HepG2 (cell line): ENCODE measurements at regions of chr18 and their contacts with region 1.

Region 1: DNA sequence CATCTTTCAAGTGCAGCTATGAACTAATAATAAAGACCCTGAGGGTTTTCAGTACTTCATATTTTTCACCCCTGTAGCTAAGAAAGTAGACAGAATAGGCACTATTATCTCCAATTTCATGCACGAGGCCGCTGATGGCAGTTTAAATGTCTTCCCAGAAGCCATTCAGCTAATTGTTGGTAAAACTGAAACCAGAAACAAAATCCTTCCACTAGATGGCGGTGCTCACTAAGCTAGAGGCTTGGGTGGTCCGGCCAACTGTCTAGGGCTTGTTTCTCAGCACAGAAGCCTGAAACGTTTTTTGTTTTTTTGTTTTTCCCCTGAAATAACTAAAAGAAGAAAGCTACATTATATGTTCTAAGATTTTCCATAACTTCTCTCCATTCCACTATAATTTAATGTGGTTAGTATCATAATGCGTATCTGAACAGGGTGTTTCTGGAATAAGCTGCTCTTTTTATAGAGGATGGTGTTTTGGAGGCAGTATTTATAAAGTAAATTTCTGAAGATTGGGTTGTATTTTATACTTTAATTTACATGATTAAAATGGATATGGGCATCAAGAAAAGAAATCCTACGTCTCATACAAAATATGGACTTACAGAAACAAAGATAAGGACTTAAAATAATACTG is 159.4 kb downstream of the PIK3C3 start:
- DNase-seq: peak; percentile 71
- ATAC-seq: peak; percentile 88
- H3K4me3 ChIP-seq: peak overlapping the region in 2 of 3 experiments; percentile 42 to 46; a peak in 2 of 6 replicates
- H3K27ac ChIP-seq: peak overlapping the region; percentile 45
- H3K4me1 ChIP-seq: peaks cover 26% of the 10 kb centered on the region
- H3K27me3 ChIP-seq: no peaks in the 10 kb centered on the region
- CTCF ChIP-seq: peak; percentile 89
- EP300 ChIP-seq: no peak
- POLR2A ChIP-seq: no peak
- RAD21 ChIP-seq: peak; percentile 91

Region 2: DNA sequence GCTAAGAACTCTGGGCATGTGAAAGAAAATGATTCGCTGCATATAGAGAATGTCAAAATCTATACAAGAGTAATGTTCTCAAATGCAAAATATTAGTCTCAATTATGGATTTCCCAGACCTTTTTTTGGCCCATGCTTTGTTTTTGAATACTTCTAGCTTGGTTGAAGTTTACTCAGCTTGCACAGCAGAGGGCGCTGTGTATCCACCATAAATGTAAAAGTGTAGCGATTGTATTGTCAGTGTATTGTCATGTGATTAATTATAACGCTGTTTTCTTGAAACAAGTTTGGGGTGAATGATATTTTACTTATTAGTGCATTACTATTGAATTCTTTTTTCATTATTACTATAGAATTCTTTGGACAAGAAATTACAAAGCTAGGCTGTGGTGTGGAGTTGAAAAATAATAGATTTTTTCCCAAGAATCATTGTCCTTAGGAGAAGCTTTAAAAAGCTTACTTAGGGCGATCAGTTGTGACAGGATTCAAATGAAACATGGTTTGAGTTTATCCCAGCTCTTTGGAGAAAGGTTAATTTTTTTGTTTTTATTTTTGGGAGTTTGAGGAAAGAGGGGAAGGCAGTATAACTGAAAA is 61.1 kb before region 1 on chr18:
- CTCF ChIA-PET with region 1: interaction called, 4 read pairs
- POLR2A ChIA-PET with region 1: interaction called, 5 read pairs
- in situ Hi-C with region 1: no loop called
- intact Hi-C with region 1: loop called (anchors 1 kb)
- DNase-seq: peak; percentile 34
- ATAC-seq: peak; percentile 79
- H3K4me3 ChIP-seq: no peak overlapping the region
- H3K27ac ChIP-seq: no peak overlapping the region
- H3K4me1 ChIP-seq: peaks cover 2% of the 10 kb centered on the region
- H3K27me3 ChIP-seq: no peaks in the 10 kb centered on the region
- CTCF ChIP-seq: peak; percentile 72
- EP300 ChIP-seq: no peak
- POLR2A ChIP-seq: no peak
- RAD21 ChIP-seq: peak; percentile 53; the same call in 1 of the 2 replicates

Region 3: GRCh38 chr18:42274488-42275137 is 160.2 kb after region 1 on chr18:
- CTCF ChIA-PET with region 1: interaction called, 28 read pairs
- POLR2A ChIA-PET with region 1: no interaction called
- in situ Hi-C with region 1: loop called (anchors 10 kb)
- intact Hi-C with region 1: loop called (anchors 1 kb)
- DNase-seq: peak; percentile 62
- ATAC-seq: peak; percentile 86
- H3K4me3 ChIP-seq: no peak overlapping the region
- H3K27ac ChIP-seq: no peak overlapping the region
- H3K4me1 ChIP-seq: no peaks in the 10 kb centered on the region
- H3K27me3 ChIP-seq: no peaks in the 10 kb centered on the region
- CTCF ChIP-seq: peak; percentile 56
- EP300 ChIP-seq: no peak
- POLR2A ChIP-seq: no peak
- RAD21 ChIP-seq: 0 out of 2 replicates have a peak, but pooled peaks have one; percentile 37

Region 4: GRCh38 chr18:42339372-42339771 is 224.9 kb after region 1 on chr18:
- CTCF ChIA-PET with region 1: no interaction called
- POLR2A ChIA-PET with region 1: interaction called, 5 read pairs
- in situ Hi-C with region 1: no loop called
- intact Hi-C with region 1: loop called (anchors 1 kb)
- DNase-seq: peak; percentile 80
- ATAC-seq: peak; percentile 51
- H3K4me3 ChIP-seq: no peak overlapping the region
- H3K27ac ChIP-seq: peak overlapping the region; percentile 77
- H3K4me1 ChIP-seq: peaks cover 67% of the 10 kb centered on the region
- H3K27me3 ChIP-seq: no peaks in the 10 kb centered on the region
- CTCF ChIP-seq: no peak
- EP300 ChIP-seq: peak in 1 of 2 experiments; percentile 68; a peak in 2 of 4 replicates
- POLR2A ChIP-seq: no peak
- RAD21 ChIP-seq: no peak

Region 5: DNA sequence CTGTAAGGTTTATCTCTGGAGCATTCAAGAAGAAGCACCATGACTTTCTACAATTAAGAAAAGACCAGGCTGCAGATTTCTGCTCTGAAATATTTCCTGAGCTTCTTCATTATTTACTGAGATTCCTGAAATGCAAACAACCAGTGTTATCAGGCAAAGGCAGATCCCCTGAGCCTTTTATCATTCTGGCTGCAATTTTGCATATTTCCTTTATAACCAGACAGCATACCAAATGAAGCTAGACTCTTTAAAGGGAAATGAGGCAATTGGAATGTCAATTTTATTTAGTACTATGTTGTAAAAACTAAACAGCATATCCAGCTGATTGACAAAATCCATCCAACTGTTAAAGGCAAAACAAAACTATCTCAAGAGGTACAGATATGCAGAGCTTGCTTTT is 628.5 kb after region 1 on chr18:
- CTCF ChIA-PET with region 1: no interaction called
- POLR2A ChIA-PET with region 1: no interaction called
- in situ Hi-C with region 1: no loop called
- intact Hi-C with region 1: loop called (anchors 10 kb)
- DNase-seq: no peak
- ATAC-seq: no peak
- H3K4me3 ChIP-seq: no peak overlapping the region
- H3K27ac ChIP-seq: no peak overlapping the region
- H3K4me1 ChIP-seq: no peaks in the 10 kb centered on the region
- H3K27me3 ChIP-seq: no peaks in the 10 kb centered on the region
- CTCF ChIP-seq: no peak
- EP300 ChIP-seq: no peak
- POLR2A ChIP-seq: no peak
- RAD21 ChIP-seq: no peak

Region 6: DNA sequence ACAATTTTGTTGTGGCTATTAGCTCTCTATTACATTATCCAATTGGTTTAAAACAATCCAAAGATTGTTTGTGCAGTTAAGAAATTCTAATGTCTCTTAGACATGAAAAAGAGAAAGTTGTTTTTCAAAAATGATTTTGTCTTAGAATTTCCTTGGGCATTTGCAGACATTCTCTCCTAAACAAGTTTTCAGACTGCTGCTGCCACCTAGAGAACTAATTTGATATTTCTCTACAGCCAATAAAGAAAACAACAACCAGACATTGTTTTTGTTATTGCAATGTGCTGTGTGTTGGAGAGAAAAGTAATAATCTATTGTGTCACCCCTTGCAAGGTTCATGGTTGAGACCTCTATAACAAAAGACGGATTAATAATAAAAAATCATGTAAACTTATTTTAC is 1281.8 kb after region 1 on chr18:
- CTCF ChIA-PET with region 1: no interaction called
- POLR2A ChIA-PET with region 1: no interaction called
- in situ Hi-C with region 1: no loop called
- intact Hi-C with region 1: loop called (anchors 10 kb)
- DNase-seq: no peak
- ATAC-seq: no peak
- H3K4me3 ChIP-seq: no peak overlapping the region
- H3K27ac ChIP-seq: no peak overlapping the region
- H3K4me1 ChIP-seq: no peaks in the 10 kb centered on the region
- H3K27me3 ChIP-seq: no peaks in the 10 kb centered on the region
- CTCF ChIP-seq: peak; percentile 18; the same call in 1 of the 2 replicates
- EP300 ChIP-seq: no peak
- POLR2A ChIP-seq: no peak
- RAD21 ChIP-seq: no peak